ENCODE measurements at regions of chr4 and their contacts with region 1.

Region 1: DNA sequence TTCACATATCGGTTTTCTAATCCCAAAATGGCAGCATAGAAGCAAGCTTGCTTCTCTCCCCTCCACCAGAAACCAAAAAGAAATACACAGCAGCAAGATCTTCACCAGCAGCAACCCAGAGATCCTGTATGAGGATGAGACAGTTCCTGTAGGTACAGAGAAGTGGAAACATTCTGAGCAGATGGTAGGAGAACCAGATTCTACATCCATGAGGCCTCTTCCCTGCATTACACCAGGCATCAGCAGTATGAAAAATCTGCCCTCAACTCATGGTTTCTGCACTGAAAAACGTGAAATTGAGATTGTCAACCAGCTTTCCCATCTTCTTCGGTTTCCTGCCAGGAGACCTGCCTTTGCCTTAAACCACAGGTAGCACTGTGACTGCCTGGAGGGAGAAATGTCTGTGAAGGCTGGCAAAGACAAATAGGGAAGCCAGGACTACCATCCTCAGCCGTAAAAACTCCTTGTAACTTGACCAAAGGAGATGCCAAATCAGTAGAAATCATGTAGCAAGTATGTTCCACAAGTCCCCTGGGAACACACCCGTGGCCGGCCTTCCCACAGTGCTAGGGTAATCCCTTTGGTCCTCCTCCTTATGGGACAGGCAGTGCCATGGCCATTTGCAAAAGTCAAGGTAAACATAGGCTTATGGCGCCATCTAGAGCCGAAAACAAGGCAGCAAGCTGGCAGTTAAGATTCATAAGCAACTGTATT is 24.0 kb upstream of the MTHFD2L start:
- DNase-seq: peak; percentile 20
- ATAC-seq: peak; percentile 89
- H3K4me3 ChIP-seq: no peak overlapping the region
- H3K27ac ChIP-seq: no peak overlapping the region
- H3K4me1 ChIP-seq: no peaks in the 10 kb centered on the region
- H3K27me3 ChIP-seq: peaks cover 0 to 4% of the 10 kb centered on the region in 2 experiments; a peak in 1 of 4 replicates
- CTCF ChIP-seq: peak; percentile 69 to 86 (median 75)
- EP300 ChIP-seq: no peak
- POLR2A ChIP-seq: no peak
- RAD21 ChIP-seq: peak; percentile 86

Region 2: DNA sequence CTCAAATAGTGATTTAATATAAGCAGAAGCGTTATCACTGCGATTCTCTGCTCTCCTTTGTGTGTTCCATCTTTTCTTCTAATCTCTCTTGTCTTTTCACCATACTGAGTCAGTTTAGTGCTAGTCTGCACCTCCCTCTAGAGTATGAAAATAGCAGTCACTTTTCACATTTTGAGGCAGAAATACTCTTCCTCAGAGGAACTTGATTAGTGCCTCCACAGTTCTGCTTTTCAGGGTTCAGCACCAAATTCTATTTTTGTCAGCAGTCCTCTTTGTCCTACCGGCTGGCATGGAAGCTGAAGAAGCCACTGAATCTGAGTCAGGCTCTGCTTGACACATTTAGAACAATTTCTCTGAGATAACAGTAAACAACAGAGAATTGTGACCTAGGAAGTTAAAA is 825.7 kb before region 1 on chr4:
- CTCF ChIA-PET with region 1: interaction called, 5 read pairs
- POLR2A ChIA-PET with region 1: no interaction called
- RAD21 ChIA-PET with region 1: interaction called, 3 read pairs
- SMC1A ChIA-PET with region 1: interaction called, 3 read pairs
- in situ Hi-C with region 1: no loop called
- intact Hi-C with region 1: loop called (anchors 10 kb)
- DNase-seq: no peak
- ATAC-seq: peak; percentile 57
- H3K4me3 ChIP-seq: no peak overlapping the region
- H3K27ac ChIP-seq: no peak overlapping the region
- H3K4me1 ChIP-seq: no peaks in the 10 kb centered on the region
- H3K27me3 ChIP-seq: no peaks in the 10 kb centered on the region
- CTCF ChIP-seq: peak; percentile 29 to 54 (median 32); a peak in 4 of 6 replicates
- EP300 ChIP-seq: no peak
- POLR2A ChIP-seq: no peak
- RAD21 ChIP-seq: peak; percentile 78

Region 3: DNA sequence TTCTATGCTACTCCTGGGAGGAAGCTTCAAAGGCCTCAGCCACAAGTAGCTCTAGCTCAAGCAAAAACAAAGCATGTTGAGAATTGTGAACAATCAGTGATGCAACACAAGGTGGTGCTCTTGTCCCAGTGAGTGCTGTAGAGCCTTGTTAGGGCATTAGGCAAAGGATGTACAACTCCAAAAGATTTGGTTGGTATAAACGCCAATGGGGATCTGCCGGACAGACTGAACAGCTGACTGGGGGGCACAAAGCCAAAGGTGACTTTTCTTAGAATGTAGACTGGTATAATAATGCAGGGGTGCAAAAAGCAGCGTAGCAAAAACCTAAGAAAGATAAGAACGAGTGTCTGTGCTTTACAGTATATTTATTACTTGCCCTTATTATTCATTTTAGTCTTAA is 792.5 kb before region 1 on chr4:
- CTCF ChIA-PET with region 1: interaction called, 19 read pairs
- POLR2A ChIA-PET with region 1: no interaction called
- RAD21 ChIA-PET with region 1: interaction called, 7 read pairs
- SMC1A ChIA-PET with region 1: interaction called, 8 read pairs
- in situ Hi-C with region 1: no loop called
- intact Hi-C with region 1: no loop called
- DNase-seq: peak; percentile 16
- ATAC-seq: peak; percentile 90
- H3K4me3 ChIP-seq: no peak overlapping the region
- H3K27ac ChIP-seq: no peak overlapping the region
- H3K4me1 ChIP-seq: no peaks in the 10 kb centered on the region
- H3K27me3 ChIP-seq: no peaks in the 10 kb centered on the region
- CTCF ChIP-seq: peak; percentile 44 to 71 (median 57); a peak in 4 of 6 replicates
- EP300 ChIP-seq: no peak
- POLR2A ChIP-seq: no peak
- RAD21 ChIP-seq: peak; percentile 82

Region 4: GRCh38 chr4:74146581-74147129 is 12.7 kb after region 1 on chr4:
- CTCF ChIA-PET with region 1: interaction called, 12 read pairs
- POLR2A ChIA-PET with region 1: no interaction called
- RAD21 ChIA-PET with region 1: interaction called, 7 read pairs
- SMC1A ChIA-PET with region 1: interaction called, 7 read pairs
- in situ Hi-C with region 1: no loop called
- intact Hi-C with region 1: no loop called
- DNase-seq: no peak
- ATAC-seq: no peak
- H3K4me3 ChIP-seq: no peak overlapping the region
- H3K27ac ChIP-seq: no peak overlapping the region
- H3K4me1 ChIP-seq: no peaks in the 10 kb centered on the region
- H3K27me3 ChIP-seq: no peaks in the 10 kb centered on the region
- CTCF ChIP-seq: no peak
- EP300 ChIP-seq: no peak
- POLR2A ChIP-seq: no peak
- RAD21 ChIP-seq: no peak

Region 5: DNA sequence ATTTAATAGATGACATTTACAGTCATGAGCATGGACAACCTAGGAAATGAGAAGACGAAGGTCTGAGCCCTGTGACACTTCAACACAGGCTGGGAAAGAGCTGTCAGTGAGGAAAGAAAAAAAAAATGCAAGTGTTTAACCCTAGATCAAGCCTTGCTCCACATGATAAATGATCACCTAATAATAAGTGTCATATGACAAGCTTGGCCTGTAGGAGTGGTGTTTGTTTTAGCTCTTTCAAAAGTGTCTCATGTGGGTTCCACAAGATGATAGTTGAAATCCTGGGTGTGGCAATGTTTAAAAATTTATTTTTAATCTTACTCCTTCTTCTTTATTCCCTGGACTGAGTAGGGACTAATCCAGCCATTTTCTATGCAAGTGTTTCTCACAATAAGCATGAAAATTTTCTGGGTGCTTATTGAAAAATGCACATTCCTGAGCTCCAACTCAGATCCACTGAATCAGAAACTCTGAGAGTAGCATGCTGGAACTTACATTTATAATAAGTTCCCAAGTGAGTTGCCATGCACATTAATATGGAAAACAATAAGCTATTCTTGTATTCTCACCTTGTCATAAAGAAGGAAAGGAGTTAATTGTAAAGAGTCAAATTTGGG is 449.2 kb after region 1 on chr4:
- CTCF ChIA-PET with region 1: no interaction called
- POLR2A ChIA-PET with region 1: no interaction called
- RAD21 ChIA-PET with region 1: no interaction called
- SMC1A ChIA-PET with region 1: no interaction called
- in situ Hi-C with region 1: no loop called
- intact Hi-C with region 1: no loop called
- DNase-seq: no peak
- ATAC-seq: no peak
- H3K4me3 ChIP-seq: no peak overlapping the region
- H3K27ac ChIP-seq: no peak overlapping the region
- H3K4me1 ChIP-seq: no peaks in the 10 kb centered on the region
- H3K27me3 ChIP-seq: no peaks in the 10 kb centered on the region
- CTCF ChIP-seq: no peak
- EP300 ChIP-seq: no peak
- POLR2A ChIP-seq: no peak
- RAD21 ChIP-seq: no peak

Measured in GM12878 (cell line).